ENCODE measurements at regions of chr13 and their contacts with region 1.

Region 1: GRCh38 chr13:32381539-32381938 is 46.4 kb downstream of the N4BP2L1 start:
- DNase-seq: peak; percentile 41 to 64 (median 58)
- H3K4me3 ChIP-seq: no peak overlapping the region
- H3K27ac ChIP-seq: no peak overlapping the region
- H3K4me1 ChIP-seq: no peaks in the 10 kb centered on the region
- H3K27me3 ChIP-seq: no peaks in the 10 kb centered on the region

Region 2: DNA sequence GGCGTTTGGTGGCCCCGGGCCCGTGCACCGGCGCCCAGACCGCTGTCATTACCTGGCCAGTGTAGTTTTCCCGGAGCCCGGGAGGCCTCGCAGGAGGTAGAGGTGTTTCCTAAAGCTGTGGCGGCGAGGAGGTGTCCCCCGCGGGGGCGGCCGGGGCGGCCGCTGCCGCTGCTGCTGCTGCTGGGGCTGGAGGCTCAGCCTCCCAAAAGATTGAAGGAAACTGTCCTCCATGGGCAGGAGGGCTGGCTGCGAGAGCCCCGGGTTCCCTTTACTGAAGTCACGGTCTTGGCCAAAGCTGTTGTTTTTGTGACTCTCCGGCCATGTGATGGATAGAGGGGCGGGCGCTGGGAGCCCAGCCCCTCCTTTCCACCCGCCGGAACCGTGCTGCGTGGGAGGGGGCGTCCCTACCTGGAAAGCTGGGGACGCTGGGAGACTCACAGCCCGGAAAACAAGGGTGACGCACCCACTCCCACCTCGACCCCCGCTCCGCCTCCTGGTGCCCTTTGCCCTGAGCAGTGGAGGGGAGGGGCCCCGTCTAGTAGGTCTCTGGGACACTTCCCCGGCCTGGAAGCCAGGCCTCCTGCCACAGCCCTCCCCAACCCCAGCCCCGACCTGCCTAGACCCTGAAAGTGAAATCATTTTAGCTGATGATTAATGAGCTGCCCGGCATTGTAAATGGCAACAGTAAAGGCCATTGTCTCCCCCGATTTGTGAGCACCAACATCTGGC is 46.5 kb after region 1 on chr13 and contains the start of gene N4BP2L1:
- CTCF ChIA-PET with region 1: interaction called, 16 read pairs
- POLR2A ChIA-PET with region 1: no interaction called
- DNase-seq: peak; percentile 89 to 97 (median 95)
- H3K4me3 ChIP-seq: peak within 1 kb of the TSS; percentile 72 to 93 (median 84)
- H3K27ac ChIP-seq: peak within 1 kb of the TSS; percentile 77 to 86
- H3K4me1 ChIP-seq: peaks cover 22 to 64% (median 43%) of the 10 kb centered on the region in 4 experiments
- H3K27me3 ChIP-seq: no peaks in the 10 kb centered on the region

Region 3: DNA sequence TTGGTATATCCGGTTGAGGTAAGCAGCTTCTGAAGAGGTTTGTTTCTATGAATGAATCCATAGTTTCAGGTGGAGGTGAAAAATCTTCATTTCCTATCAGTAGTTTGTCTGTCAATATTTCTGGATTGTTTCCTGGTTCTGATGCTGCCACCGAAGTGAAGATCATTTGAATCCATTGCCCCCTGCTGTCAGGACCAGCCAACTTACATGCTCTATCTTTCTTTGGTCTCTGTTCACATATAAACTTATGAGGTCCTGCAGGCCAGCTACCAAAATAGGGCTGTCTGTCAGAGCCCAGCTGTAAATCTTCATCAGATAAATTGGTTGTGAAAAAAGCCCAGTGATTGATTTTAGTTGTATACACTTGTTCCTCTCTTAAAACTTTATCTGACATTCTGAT is 61.6 kb after region 1 on chr13:
- CTCF ChIA-PET with region 1: interaction called, 13 read pairs
- POLR2A ChIA-PET with region 1: no interaction called
- DNase-seq: peak; percentile 61 to 77 (median 71)
- H3K4me3 ChIP-seq: no peak overlapping the region
- H3K27ac ChIP-seq: no peak overlapping the region
- H3K4me1 ChIP-seq: peaks cover 0 to 4% (median 0%) of the 10 kb centered on the region in 4 experiments
- H3K27me3 ChIP-seq: no peaks in the 10 kb centered on the region

Measured in common myeloid progenitor, CD34-positive (primary cell).